Activated CD8-positive, alpha-beta T cell treated with anti-CD3 and anti-CD28 coated beads for 36 hours (primary cell): ENCODE measurements at regions of chr11 and their contacts with region 1.

Region 1: GRCh38 chr11:10307442-10308207 is 2.8 kb downstream of the ADM start:
- DNase-seq: peak; percentile 96
- ATAC-seq: peak; percentile 75
- H3K4me3 Mint-ChIP-seq: peak overlapping the region; percentile 89
- H3K27ac Mint-ChIP-seq: peak overlapping the region; percentile 91
- H3K4me1 Mint-ChIP-seq: peaks cover 35% of the 10 kb centered on the region
- H3K27me3 Mint-ChIP-seq: peaks cover 39% of the 10 kb centered on the region
- CTCF ChIP-seq: peak; percentile 100

Region 2: GRCh38 chr11:9757809-9758636 is 549.6 kb before region 1 on chr11:
- CTCF ChIA-PET with region 1: interaction called, 38 read pairs
- POLR2A ChIA-PET with region 1: interaction called, 12 read pairs
- intact Hi-C with region 1: loop called (anchors 5 kb)
- DNase-seq: peak; percentile 95
- ATAC-seq: peak; percentile 64
- H3K4me3 Mint-ChIP-seq: peak overlapping the region; percentile 88
- H3K27ac Mint-ChIP-seq: peak overlapping the region; percentile 87
- H3K4me1 Mint-ChIP-seq: peaks cover 53% of the 10 kb centered on the region
- H3K27me3 Mint-ChIP-seq: no peaks in the 10 kb centered on the region
- CTCF ChIP-seq: peak; percentile 93

Region 3: DNA sequence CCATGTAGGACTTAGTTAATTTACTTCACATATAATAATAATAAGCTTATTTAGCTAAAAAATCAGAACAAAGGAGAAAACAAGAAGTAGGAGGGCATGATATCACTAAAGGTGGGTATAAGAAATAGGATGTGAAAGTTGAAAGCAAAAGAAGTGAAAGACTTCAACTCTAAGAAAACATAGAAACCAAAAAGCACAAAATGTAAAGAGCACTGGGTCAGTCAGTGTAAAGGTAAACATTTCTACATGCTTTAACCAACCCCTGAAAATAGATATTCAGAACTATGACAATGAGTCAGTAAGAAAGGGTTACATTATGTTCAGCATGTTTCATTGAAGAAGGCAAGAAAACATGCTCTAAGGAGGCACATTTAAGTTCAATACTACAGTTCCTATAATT is 344.9 kb before region 1 on chr11:
- CTCF ChIA-PET with region 1: no interaction called
- POLR2A ChIA-PET with region 1: no interaction called
- intact Hi-C with region 1: no loop called
- DNase-seq: no peak
- ATAC-seq: no peak
- H3K4me3 Mint-ChIP-seq: no peak overlapping the region
- H3K27ac Mint-ChIP-seq: no peak overlapping the region
- H3K4me1 Mint-ChIP-seq: no peaks in the 10 kb centered on the region
- H3K27me3 Mint-ChIP-seq: no peaks in the 10 kb centered on the region
- CTCF ChIP-seq: no peak

Region 4: GRCh38 chr11:10181811-10182210 is 125.8 kb before region 1 on chr11:
- CTCF ChIA-PET with region 1: interaction called, 22 read pairs
- POLR2A ChIA-PET with region 1: no interaction called
- intact Hi-C with region 1: no loop called
- DNase-seq: no peak
- ATAC-seq: peak; percentile 24
- H3K4me3 Mint-ChIP-seq: no peak overlapping the region
- H3K27ac Mint-ChIP-seq: no peak overlapping the region
- H3K4me1 Mint-ChIP-seq: no peaks in the 10 kb centered on the region
- H3K27me3 Mint-ChIP-seq: no peaks in the 10 kb centered on the region
- CTCF ChIP-seq: no peak

Region 5: DNA sequence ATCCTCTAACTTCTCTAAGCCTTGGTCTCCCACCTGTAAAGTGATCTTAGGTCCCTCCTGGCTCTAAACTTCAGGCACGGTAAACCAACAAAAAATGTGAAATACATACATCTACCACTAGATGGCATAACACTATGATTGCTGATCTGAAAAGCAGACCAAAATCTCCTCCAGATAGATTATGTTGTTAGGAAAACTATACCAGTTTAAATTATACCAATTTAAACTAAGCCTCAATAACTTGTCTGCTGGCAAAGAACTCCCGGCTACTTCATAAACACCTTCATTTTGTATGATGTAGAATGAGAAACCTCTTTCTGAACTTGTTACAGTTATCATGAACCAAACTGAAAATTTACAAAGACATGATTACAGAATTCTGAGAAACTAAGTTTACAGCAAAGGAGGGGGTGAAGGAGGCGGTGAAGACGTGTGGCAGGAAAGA is 99.5 kb before region 1 on chr11:
- CTCF ChIA-PET with region 1: interaction called, 135 read pairs
- POLR2A ChIA-PET with region 1: no interaction called
- intact Hi-C with region 1: loop called (anchors 2 kb)
- DNase-seq: peak; percentile 7
- ATAC-seq: peak; percentile 80
- H3K4me3 Mint-ChIP-seq: no peak overlapping the region
- H3K27ac Mint-ChIP-seq: no peak overlapping the region
- H3K4me1 Mint-ChIP-seq: no peaks in the 10 kb centered on the region
- H3K27me3 Mint-ChIP-seq: peaks cover 3% of the 10 kb centered on the region
- CTCF ChIP-seq: peak; percentile 79

Region 6: DNA sequence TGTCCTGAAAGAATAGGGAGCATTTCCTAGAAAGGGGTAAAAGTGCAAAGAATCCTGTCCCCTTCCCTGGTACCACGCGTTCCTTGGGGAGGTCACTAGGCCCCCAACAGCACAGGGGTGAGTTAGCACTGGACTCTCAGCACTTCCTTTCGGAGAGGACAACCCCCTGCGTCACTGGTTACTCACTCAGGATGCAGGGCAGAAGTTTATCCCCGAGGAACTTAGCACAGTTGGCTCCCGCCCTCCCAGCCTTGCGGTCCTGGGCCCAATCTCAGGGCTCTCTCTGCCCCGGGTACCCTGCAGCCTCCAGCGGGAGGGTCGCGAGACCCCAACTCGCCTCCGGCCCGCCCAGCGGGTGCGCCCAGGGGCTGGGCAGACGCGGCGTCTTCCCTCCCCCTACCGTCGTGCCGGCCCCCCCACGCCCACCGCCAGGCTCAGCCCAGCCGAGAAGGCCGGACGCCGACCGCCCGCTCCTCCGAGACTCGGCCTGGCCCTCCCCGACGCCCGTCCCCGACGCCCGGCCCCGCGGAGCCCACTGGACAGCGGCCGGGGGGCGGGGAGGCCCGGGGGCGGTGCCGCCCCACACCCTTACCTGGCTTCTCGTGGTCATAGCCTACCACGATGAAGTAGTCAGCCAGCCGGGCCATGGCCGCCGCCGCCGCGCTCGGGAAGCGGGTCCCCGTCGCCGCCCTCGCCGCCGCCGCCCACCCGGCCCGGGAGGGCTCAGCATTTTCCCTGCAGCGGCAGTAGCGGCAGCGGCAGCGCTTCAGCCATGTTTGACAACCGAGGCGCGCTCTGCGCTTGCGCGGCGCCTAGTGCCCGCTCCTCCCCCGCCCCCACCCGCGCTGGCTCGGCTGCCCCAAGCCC is 14.0 kb before region 1 on chr11 and contains the start of gene SBF2:
- CTCF ChIA-PET with region 1: interaction called, 42 read pairs
- POLR2A ChIA-PET with region 1: interaction called, 6 read pairs
- intact Hi-C with region 1: no loop called
- DNase-seq: peak; percentile 85
- ATAC-seq: peak; percentile 69
- H3K4me3 Mint-ChIP-seq: peak within 1 kb of the TSS; percentile 65
- H3K27ac Mint-ChIP-seq: peak within 1 kb of the TSS; percentile 22
- H3K4me1 Mint-ChIP-seq: peaks cover 32% of the 10 kb centered on the region
- H3K27me3 Mint-ChIP-seq: peaks cover 30% of the 10 kb centered on the region
- CTCF ChIP-seq: no peak
- total RNA-seq, gene SBF2: 10.0 to 11.0 TPM

Region 7: DNA sequence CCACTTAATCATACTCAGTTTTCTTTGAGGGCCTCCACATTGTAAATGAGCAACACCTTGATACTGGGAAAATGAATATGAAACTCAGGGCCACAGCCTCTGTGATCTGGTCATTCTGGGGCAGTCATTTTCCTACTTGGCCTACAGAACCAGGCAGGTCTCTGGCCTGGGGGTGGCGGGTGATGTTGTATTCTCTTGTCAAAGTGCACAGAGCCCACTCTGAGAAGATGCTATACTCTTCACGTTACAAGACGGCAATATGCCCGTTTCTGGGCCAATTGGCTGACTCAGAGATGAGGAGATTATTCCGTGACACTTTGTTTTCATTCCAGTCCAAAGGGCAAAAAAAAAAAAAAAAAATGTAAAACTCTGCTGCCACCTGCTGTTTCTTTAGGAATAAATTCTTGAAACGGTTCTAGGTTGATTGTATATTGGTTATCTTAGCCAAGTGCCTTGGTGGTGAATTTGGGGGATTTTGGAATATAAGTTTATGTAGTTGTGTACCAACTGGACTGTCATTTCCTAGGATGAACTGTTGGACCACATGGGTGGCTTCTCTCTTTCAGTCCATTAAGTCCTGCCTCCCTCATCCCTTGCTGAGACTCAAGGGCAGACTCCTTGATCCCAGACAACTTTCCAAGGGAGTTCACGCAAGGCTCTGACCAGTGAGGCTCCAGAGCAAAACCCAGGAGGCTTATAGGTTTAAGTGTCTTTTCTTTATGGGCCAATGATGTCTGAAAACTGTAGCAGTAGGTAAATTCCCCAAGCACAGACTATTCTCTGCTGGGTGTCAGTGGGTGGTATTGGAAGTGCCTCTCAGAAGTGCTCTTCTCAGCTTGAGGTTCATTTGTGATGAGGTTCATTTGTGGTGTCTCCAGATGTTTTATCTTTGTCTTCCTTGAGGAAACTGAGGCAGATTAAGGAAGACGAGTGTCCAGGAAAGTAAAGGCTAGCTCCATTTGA is 15.5 kb after region 1 on chr11:
- CTCF ChIA-PET with region 1: interaction called, 37 read pairs
- POLR2A ChIA-PET with region 1: interaction called, 5 read pairs
- intact Hi-C with region 1: no loop called
- DNase-seq: peak; percentile 73
- ATAC-seq: peak; percentile 78
- H3K4me3 Mint-ChIP-seq: peak overlapping the region; percentile 32
- H3K27ac Mint-ChIP-seq: peak overlapping the region; percentile 86
- H3K4me1 Mint-ChIP-seq: peaks cover 20% of the 10 kb centered on the region
- H3K27me3 Mint-ChIP-seq: peaks cover 7% of the 10 kb centered on the region
- CTCF ChIP-seq: peak; percentile 72

Region 8: DNA sequence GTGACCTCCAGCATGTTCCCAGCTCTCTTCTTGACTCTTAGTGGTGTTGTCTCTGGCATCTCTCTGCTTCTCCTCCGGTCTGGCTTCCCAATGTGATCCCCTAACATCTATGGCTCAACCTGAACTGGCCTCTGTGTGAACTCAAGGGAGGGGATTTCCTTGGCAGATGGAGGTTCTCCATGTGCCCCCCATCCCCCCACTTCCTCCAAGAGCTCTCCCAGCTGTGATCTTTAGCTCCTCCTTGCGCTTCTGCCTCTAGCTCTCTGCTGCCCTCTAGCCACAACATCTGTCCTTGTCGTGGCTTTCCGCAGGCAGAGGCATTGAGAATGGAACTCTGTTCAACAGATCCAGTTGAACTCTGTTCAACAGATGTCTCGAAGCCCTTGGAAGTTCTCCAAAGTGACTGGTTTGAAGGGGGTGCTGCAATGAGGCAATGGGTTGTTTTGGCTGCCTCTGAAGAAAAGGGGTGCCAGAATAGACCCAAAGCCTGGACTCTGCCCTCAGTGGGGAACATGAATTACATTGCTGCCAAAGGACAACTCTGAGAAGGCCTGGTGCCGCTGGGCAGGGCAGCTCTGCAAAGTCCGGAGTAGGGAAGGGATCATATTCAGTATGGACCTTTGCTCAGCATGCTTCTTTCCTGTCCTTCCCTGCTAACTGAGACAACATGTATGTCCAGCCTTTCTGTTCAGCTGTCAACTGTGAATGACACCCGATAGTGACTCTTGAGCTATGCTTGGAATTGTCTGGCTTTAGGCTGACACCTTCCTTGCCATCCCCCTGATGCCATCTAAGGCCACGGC is 59.1 kb after region 1 on chr11:
- CTCF ChIA-PET with region 1: interaction called, 10 read pairs
- POLR2A ChIA-PET with region 1: no interaction called
- intact Hi-C with region 1: no loop called
- DNase-seq: peak; percentile 88
- ATAC-seq: peak; percentile 96
- H3K4me3 Mint-ChIP-seq: no peak overlapping the region
- H3K27ac Mint-ChIP-seq: peak overlapping the region; percentile 39
- H3K4me1 Mint-ChIP-seq: peaks cover 5% of the 10 kb centered on the region
- H3K27me3 Mint-ChIP-seq: peaks cover 10% of the 10 kb centered on the region
- CTCF ChIP-seq: peak; percentile 90